ENCODE measurements at regions of chr11 and their contacts with region 1.

Region 1: GRCh38 chr11:94602430-94603372 is 35.5 kb downstream of the PIWIL4 start:
- DNase-seq: peak; percentile 63
- H3K4me3 Mint-ChIP-seq: peak overlapping the region; percentile 11
- H3K27ac Mint-ChIP-seq: peak overlapping the region; percentile 95
- H3K4me1 Mint-ChIP-seq: peaks cover 20% of the 10 kb centered on the region
- H3K27me3 Mint-ChIP-seq: no peaks in the 10 kb centered on the region
- CTCF ChIP-seq: no peak

Region 2: GRCh38 chr11:94481342-94481741 is 121.4 kb before region 1 on chr11:
- CTCF ChIA-PET with region 1: no interaction called
- intact Hi-C with region 1: no loop called
- DNase-seq: no peak
- H3K4me3 Mint-ChIP-seq: no peak overlapping the region
- H3K27ac Mint-ChIP-seq: no peak overlapping the region
- H3K4me1 Mint-ChIP-seq: no peaks in the 10 kb centered on the region
- H3K27me3 Mint-ChIP-seq: no peaks in the 10 kb centered on the region
- CTCF ChIP-seq: no peak

Region 3: DNA sequence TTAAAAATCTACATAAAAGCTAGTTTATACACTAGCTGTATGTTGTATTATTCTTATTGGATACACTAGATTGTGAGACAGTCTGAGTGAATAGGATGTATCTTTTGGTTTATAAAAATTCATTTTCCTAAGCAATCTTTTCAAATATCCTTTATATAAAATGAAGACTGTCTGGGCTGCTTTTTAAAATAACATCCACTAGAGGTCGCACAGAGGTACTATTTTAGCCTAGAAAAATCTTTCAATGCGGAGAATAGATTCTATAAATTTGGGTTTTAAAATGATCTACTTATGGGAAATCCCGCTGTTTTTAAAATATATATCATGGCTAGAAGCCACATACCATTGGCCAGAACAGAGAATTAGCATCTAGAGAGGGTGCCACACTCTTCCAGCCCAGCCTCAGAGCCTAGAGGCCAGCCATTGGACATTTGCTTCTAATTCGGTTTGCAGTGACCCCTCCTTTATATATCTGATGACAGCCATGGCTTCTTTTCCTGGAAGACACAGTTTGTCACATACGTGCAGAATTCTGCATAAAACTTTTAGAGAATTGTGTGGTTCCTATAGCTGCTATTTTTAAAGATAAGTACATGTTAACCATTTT is 83.1 kb before region 1 on chr11:
- CTCF ChIA-PET with region 1: interaction called, 5 read pairs
- intact Hi-C with region 1: loop called (anchors 2 kb)
- DNase-seq: no peak
- H3K4me3 Mint-ChIP-seq: no peak overlapping the region
- H3K27ac Mint-ChIP-seq: no peak overlapping the region
- H3K4me1 Mint-ChIP-seq: no peaks in the 10 kb centered on the region
- H3K27me3 Mint-ChIP-seq: no peaks in the 10 kb centered on the region
- CTCF ChIP-seq: peak; percentile 19

Region 4: DNA sequence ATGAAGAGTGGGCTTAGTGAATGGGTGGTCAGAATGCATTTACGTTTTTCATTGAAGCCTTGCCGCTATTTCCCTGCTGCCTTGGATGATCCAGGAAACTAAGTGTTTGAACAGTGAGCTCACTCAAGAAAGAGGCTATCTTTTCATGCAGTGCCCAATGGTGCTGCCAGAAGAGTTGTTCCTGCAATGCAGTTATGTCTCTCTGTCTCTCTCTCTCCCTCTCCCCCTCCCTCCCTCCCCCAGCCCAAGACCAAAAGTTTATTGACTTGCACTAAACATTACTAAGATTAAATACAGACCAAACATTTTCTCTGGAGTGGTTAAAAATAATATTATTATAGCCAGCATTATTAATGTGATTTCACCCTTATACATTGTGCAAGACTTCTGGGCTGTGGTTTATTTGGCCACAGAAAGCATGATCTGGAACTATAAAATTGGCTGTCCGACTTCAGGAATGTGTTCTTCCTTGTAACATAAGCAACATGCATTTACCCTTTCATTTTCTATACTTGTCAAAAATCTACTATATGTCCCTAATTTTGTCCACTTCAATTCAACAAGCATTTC is 65.6 kb before region 1 on chr11:
- CTCF ChIA-PET with region 1: no interaction called
- intact Hi-C with region 1: loop called (anchors 5 kb)
- DNase-seq: no peak
- H3K4me3 Mint-ChIP-seq: peak overlapping the region; percentile 4
- H3K27ac Mint-ChIP-seq: peak overlapping the region; percentile 45
- H3K4me1 Mint-ChIP-seq: peaks cover 73% of the 10 kb centered on the region
- H3K27me3 Mint-ChIP-seq: no peaks in the 10 kb centered on the region
- CTCF ChIP-seq: no peak

Region 5: DNA sequence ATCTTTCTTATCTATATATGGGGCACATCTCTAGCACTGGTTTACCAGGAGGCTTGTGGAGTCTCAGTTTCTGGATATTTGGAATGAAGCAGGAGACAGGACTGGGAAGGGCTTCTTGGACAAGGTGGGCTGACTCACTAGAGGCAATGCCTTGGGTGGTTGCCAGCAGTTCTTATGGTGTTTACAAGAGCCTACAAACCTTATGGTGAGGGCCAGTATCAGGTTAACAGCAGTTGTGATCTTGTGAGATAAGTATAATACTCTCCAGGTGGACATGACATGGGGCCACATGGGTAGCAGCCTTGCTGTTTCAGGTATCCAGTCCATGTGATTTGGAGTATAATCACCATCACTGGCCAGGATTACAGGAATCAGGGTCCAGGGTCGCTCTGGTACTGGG is 48.8 kb before region 1 on chr11:
- CTCF ChIA-PET with region 1: no interaction called
- intact Hi-C with region 1: loop called (anchors 2 kb)
- DNase-seq: no peak
- H3K4me3 Mint-ChIP-seq: no peak overlapping the region
- H3K27ac Mint-ChIP-seq: no peak overlapping the region
- H3K4me1 Mint-ChIP-seq: peaks cover 34% of the 10 kb centered on the region
- H3K27me3 Mint-ChIP-seq: no peaks in the 10 kb centered on the region
- CTCF ChIP-seq: no peak

Measured in Calu3 (cell line).